ENCODE measurements at regions of chr7 and their contacts with region 1.

Region 1: DNA sequence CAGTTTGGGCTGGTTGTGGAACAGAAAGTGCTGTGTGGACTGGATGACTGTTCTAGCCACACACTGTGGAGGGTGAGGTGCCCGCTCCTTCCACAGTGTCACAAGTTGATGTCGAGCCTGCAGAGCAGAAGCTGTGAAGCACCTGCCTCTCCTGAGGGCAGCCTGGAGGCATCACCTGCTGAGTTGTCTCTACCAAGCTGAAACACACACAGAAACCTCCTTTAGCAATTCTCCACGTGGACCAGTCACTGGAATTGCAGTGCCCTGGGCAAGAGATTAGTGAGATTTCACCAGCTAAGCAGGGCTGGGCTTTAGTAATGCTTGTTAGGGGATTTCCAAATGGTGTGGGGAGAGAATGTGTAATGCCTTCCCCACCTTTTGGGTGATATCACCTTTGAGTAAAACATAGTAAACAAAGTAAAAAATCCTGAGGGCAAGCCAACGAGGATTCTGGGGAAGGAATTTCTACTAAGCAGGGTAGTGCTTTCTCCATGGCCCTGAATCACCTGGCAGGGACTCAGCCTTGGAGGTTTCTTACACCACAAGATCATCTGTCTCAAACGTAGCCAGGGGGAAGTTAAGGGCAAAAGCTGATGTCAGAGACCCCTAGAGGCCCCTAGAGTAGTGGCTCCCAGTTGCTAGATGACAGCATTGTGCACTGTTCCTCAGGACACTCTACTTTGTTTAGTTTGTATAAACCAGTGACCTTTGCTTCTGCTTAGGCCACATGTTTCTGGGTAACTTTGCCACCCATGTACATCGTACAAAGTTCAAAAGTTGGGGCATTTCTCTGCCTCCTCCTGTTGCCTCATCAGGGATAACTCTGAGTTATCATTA is 233.1 kb upstream of the IGFBP3 start:
- DNase-seq: peak; percentile 24 to 56
- H3K4me3 ChIP-seq: no peak overlapping the region
- H3K4me3 Mint-ChIP-seq: no peak overlapping the region
- H3K27ac Mint-ChIP-seq: peak overlapping the region; percentile 69
- H3K4me1 ChIP-seq: peaks cover 37% of the 10 kb centered on the region
- H3K4me1 Mint-ChIP-seq: peaks cover 16% of the 10 kb centered on the region
- H3K27me3 ChIP-seq: no peaks in the 10 kb centered on the region
- H3K27me3 Mint-ChIP-seq: no peaks in the 10 kb centered on the region
- CTCF ChIP-seq: no peak

Region 2: GRCh38 chr7:46170792-46171191 is 16.6 kb after region 1 on chr7:
- CTCF ChIA-PET with region 1: no interaction called
- POLR2A ChIA-PET with region 1: no interaction called
- intact Hi-C with region 1: loop called (anchors 1 kb)
- DNase-seq: no peak
- H3K4me3 ChIP-seq: no peak overlapping the region
- H3K4me3 Mint-ChIP-seq: no peak overlapping the region
- H3K27ac Mint-ChIP-seq: no peak overlapping the region
- H3K4me1 ChIP-seq: no peaks in the 10 kb centered on the region
- H3K4me1 Mint-ChIP-seq: no peaks in the 10 kb centered on the region
- H3K27me3 ChIP-seq: no peaks in the 10 kb centered on the region; the same call in 1 of the 2 replicates
- H3K27me3 Mint-ChIP-seq: peaks cover 6% of the 10 kb centered on the region
- CTCF ChIP-seq: no peak